Activated B cell treated with CpG ODN at 0.5 μM for 24 hours (primary cell): ENCODE measurements at regions of chrX and their contacts with region 1.

Region 1: GRCh38 chrX:55057675-55058249 is 17.1 kb upstream of the PAGE2B start:
- DNase-seq: no peak
- ATAC-seq: peak; percentile 54
- H3K4me3 Mint-ChIP-seq: peak overlapping the region; percentile 68
- H3K27ac Mint-ChIP-seq: no peak overlapping the region
- H3K4me1 Mint-ChIP-seq: peaks cover 11% of the 10 kb centered on the region
- H3K27me3 Mint-ChIP-seq: no peaks in the 10 kb centered on the region
- CTCF ChIP-seq: peak; percentile 18

Region 2: GRCh38 chrX:53831662-53832635 is 1225.8 kb before region 1 on chrX:
- CTCF ChIA-PET with region 1: no interaction called
- POLR2A ChIA-PET with region 1: no interaction called
- intact Hi-C with region 1: loop called (anchors 10 kb)
- DNase-seq: peak; percentile 15
- ATAC-seq: peak; percentile 67
- H3K4me3 Mint-ChIP-seq: peak overlapping the region; percentile 19
- H3K27ac Mint-ChIP-seq: no peak overlapping the region
- H3K4me1 Mint-ChIP-seq: peaks cover 2% of the 10 kb centered on the region
- H3K27me3 Mint-ChIP-seq: no peaks in the 10 kb centered on the region
- CTCF ChIP-seq: no peak

Region 3: DNA sequence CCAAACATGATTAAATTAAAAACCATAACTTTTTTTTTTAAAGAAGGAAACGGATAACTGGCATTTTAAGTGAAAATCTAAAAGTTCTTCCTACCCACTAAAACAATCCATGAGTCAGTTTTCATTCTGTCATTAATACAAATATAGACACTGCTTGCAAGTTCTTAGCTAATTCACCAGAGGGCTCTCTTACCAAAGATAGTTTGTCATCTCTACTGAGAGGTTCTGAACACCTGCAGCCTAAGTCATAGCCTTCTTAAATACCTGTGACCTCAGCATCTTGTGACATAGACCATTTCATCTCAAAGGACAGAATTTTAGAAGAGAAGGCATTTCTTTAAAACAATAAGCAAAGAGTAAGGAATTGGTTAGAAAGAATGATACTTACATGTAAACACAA is 809.5 kb before region 1 on chrX:
- CTCF ChIA-PET with region 1: no interaction called
- POLR2A ChIA-PET with region 1: no interaction called
- intact Hi-C with region 1: loop called (anchors 2 kb)
- DNase-seq: no peak
- ATAC-seq: no peak
- H3K4me3 Mint-ChIP-seq: no peak overlapping the region
- H3K27ac Mint-ChIP-seq: no peak overlapping the region
- H3K4me1 Mint-ChIP-seq: no peaks in the 10 kb centered on the region
- H3K27me3 Mint-ChIP-seq: no peaks in the 10 kb centered on the region
- CTCF ChIP-seq: no peak

Region 4: GRCh38 chrX:54825716-54826438 is 231.9 kb before region 1 on chrX:
- CTCF ChIA-PET with region 1: no interaction called
- POLR2A ChIA-PET with region 1: no interaction called
- intact Hi-C with region 1: loop called (anchors 1 kb)
- DNase-seq: no peak
- ATAC-seq: peak; percentile 45
- H3K4me3 Mint-ChIP-seq: no peak overlapping the region
- H3K27ac Mint-ChIP-seq: no peak overlapping the region
- H3K4me1 Mint-ChIP-seq: no peaks in the 10 kb centered on the region
- H3K27me3 Mint-ChIP-seq: no peaks in the 10 kb centered on the region
- CTCF ChIP-seq: no peak

Region 5: GRCh38 chrX:54891573-54891972 is 166.2 kb before region 1 on chrX:
- CTCF ChIA-PET with region 1: interaction called, 9 read pairs
- POLR2A ChIA-PET with region 1: no interaction called
- intact Hi-C with region 1: loop called (anchors 1 kb)
- DNase-seq: no peak
- ATAC-seq: no peak
- H3K4me3 Mint-ChIP-seq: no peak overlapping the region
- H3K27ac Mint-ChIP-seq: no peak overlapping the region
- H3K4me1 Mint-ChIP-seq: no peaks in the 10 kb centered on the region
- H3K27me3 Mint-ChIP-seq: peaks cover 6% of the 10 kb centered on the region
- CTCF ChIP-seq: no peak

Region 6: DNA sequence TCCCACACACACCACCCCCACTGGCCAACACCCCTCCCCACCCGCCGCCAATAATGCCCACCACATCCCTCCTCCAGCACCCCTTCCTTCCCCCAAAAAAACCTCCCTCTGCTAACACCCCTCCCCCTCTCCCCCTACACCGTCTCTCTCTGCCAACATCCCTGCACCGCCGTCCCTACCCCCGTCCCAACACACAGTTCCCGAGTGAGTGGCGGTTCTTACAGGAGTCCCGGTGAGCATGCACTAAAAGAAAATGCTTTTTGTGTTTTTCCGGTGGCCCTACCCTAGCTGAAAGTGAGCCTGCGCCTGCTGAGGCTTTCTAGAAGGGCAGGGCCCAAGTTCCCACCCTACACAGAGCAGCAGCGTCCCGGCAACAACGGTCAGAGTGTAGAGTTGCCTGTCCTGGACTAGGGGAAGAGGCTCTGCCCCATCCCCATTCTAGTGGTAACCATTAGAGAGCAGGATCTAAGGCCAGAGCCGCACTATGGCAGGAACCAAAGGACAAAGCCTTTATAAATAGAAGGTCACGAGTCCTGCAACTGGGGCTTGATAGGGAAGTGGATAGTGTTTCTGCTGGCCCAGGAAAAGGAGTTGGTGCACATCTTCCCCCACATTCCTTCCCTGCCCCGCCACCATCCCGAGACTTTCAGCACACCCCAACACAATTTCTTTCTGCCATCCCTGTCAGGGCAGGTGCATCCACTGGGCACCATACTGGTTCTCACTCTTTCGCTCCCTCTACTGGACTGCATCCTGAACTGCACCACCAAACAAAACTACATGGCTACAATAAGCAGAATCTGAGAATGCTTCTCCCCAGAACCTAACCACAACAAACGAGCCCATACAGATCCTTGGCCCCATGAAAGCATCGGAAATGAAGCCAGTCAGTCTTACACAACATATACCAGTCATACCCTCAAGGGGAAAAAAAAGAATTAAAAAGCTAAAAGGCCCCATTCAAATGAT is 285.1 kb after region 1 on chrX:
- CTCF ChIA-PET with region 1: no interaction called
- POLR2A ChIA-PET with region 1: no interaction called
- intact Hi-C with region 1: loop called (anchors 2 kb)
- DNase-seq: no peak
- ATAC-seq: peak; percentile 68
- H3K4me3 Mint-ChIP-seq: no peak overlapping the region
- H3K27ac Mint-ChIP-seq: no peak overlapping the region
- H3K4me1 Mint-ChIP-seq: peaks cover 3% of the 10 kb centered on the region
- H3K27me3 Mint-ChIP-seq: peaks cover 4% of the 10 kb centered on the region
- CTCF ChIP-seq: no peak